CD8-positive, alpha-beta memory T cell (primary cell): ENCODE measurements at regions of chr6 and their contacts with region 1.

Region 1: GRCh38 chr6:26342106-26343004 is 22.6 kb upstream of the BTN3A2 start:
- DNase-seq: no peak
- H3K4me3 ChIP-seq: peak overlapping the region; percentile 48
- H3K4me3 Mint-ChIP-seq: peak overlapping the region; percentile 41 to 91 (median 86)
- H3K27ac ChIP-seq: no peak overlapping the region
- H3K27ac Mint-ChIP-seq: peak overlapping the region in 7 of 8 donors; percentile 48 to 95 (median 73)
- H3K4me1 ChIP-seq: no peaks in the 10 kb centered on the region
- H3K4me1 Mint-ChIP-seq: peaks cover 9 to 12% (median 10%) of the 10 kb centered on the region in 3 donors
- H3K27me3 ChIP-seq: no peaks in the 10 kb centered on the region
- H3K27me3 Mint-ChIP-seq: peaks cover 0 to 2% of the 10 kb centered on the region in 2 donors

Region 2: GRCh38 chr6:26329763-26330511 is 12.4 kb before region 1 on chr6:
- CTCF ChIA-PET with region 1: interaction called, 30 read pairs
- POLR2A ChIA-PET with region 1: interaction called, 3 read pairs
- DNase-seq: peak; percentile 23 to 65 (median 56)
- H3K4me3 ChIP-seq: no peak overlapping the region
- H3K4me3 Mint-ChIP-seq: peak overlapping the region; percentile 51 to 85 (median 82)
- H3K27ac ChIP-seq: peak overlapping the region; percentile 41
- H3K27ac Mint-ChIP-seq: peak overlapping the region in 7 of 8 donors; percentile 64 to 93 (median 81)
- H3K4me1 ChIP-seq: peaks cover 23% of the 10 kb centered on the region
- H3K4me1 Mint-ChIP-seq: peaks cover 36 to 61% (median 55%) of the 10 kb centered on the region in 3 donors
- H3K27me3 ChIP-seq: peaks cover 17% of the 10 kb centered on the region
- H3K27me3 Mint-ChIP-seq: peaks cover 34 to 38% of the 10 kb centered on the region in 2 donors

Region 3: DNA sequence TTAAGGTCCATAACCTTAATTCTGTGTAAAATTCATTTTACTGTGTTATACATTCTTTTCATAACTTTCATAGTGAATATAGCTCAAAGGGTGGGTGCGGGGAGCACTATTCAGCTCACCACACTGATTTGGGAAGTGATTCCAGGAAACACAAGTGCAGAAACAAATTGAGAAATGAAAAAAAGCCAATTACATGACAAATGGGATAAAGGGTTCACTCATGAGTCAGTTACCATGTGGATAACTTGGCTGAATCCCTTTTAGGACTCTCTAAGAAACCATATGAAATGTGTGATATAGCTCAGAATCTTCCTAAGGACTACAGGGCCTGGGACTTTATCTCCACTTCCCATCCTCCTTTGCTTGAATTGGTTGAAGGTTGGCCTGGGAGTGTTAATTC is 112.3 kb after region 1 on chr6:
- CTCF ChIA-PET with region 1: interaction called, 13 read pairs
- POLR2A ChIA-PET with region 1: no interaction called
- DNase-seq: no peak
- H3K4me3 ChIP-seq: no peak overlapping the region
- H3K4me3 Mint-ChIP-seq: no peak overlapping the region
- H3K27ac ChIP-seq: no peak overlapping the region
- H3K27ac Mint-ChIP-seq: peak overlapping the region in 6 of 8 donors; percentile 43 to 86 (median 61)
- H3K4me1 ChIP-seq: peaks cover 17% of the 10 kb centered on the region
- H3K4me1 Mint-ChIP-seq: peaks cover 32 to 51% (median 51%) of the 10 kb centered on the region in 3 donors
- H3K27me3 ChIP-seq: no peaks in the 10 kb centered on the region
- H3K27me3 Mint-ChIP-seq: no peaks in the 10 kb centered on the region

Region 4: GRCh38 chr6:26568601-26569432 is 226.5 kb after region 1 on chr6:
- CTCF ChIA-PET with region 1: interaction called, 21 read pairs
- POLR2A ChIA-PET with region 1: interaction called, 4 read pairs
- DNase-seq: peak; percentile 95 to 99 (median 96)
- H3K4me3 ChIP-seq: peak overlapping the region; percentile 89
- H3K4me3 Mint-ChIP-seq: peak overlapping the region; percentile 91 to 97 (median 96)
- H3K27ac ChIP-seq: peak overlapping the region; percentile 75
- H3K27ac Mint-ChIP-seq: peak overlapping the region; percentile 89 to 99 (median 98)
- H3K4me1 ChIP-seq: peaks cover 6% of the 10 kb centered on the region
- H3K4me1 Mint-ChIP-seq: peaks cover 23 to 36% (median 29%) of the 10 kb centered on the region in 3 donors
- H3K27me3 ChIP-seq: no peaks in the 10 kb centered on the region
- H3K27me3 Mint-ChIP-seq: peaks cover 3 to 19% of the 10 kb centered on the region in 2 donors